ENCODE measurements at regions of chr12 and their contacts with region 1.

Region 1: GRCh38 chr12:123232807-123233543 is at the starts of genes MPHOSPH9 and MTRFR:
- DNase-seq: peak; percentile 99
- ATAC-seq: peak; percentile 97
- H3K4me3 ChIP-seq: peak within 1 kb of the TSS; percentile 70
- H3K27ac ChIP-seq: peak within 1 kb of the TSS; percentile 87
- H3K4me1 ChIP-seq: peaks cover 3% of the 10 kb centered on the region
- H3K27me3 ChIP-seq: no peaks in the 10 kb centered on the region
- CTCF ChIP-seq: no peak
- POLR2A ChIP-seq: peak; percentile 99
- RAD21 ChIP-seq: no peak
- total RNA-seq, gene MPHOSPH9: 17.0 and 30.8 TPM in 2 replicates
- total RNA-seq, gene MTRFR: 10.2 and 12.2 TPM in 2 replicates

Region 2: DNA sequence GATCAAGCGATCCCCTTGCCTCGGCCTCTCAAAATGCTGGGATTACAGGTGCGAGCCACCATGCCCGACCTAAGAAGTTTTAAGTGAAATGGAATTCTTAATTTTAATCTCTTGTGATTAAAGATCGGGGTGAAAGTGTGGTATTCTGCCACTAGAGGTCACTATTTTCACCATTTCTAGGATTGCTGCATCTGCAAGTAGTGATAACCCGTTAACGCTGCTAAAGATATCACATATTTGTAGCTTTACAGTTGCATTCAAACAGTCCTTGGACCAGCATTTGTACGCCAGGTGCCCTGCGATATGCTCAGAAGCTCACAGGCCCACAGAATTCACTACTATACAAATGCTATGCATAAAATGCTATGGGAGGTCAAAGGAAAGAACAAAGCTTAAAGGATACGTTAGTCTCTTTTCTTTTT is 439.3 kb before region 1 on chr12:
- CTCF ChIA-PET with region 1: interaction called, 5 read pairs
- POLR2A ChIA-PET with region 1: no interaction called
- dilution Hi-C with region 1: no loop called
- in situ Hi-C with region 1: no loop called
- intact Hi-C with region 1: loop called (anchors 2 kb)
- DNase-seq: peak; percentile 69
- ATAC-seq: peak; percentile 74
- H3K4me3 ChIP-seq: no peak overlapping the region
- H3K27ac ChIP-seq: no peak overlapping the region
- H3K4me1 ChIP-seq: no peaks in the 10 kb centered on the region
- H3K27me3 ChIP-seq: no peaks in the 10 kb centered on the region
- CTCF ChIP-seq: peak; percentile 71
- POLR2A ChIP-seq: no peak
- RAD21 ChIP-seq: peak; percentile 72

Region 3: GRCh38 chr12:122895705-122896636 is 337.0 kb before region 1 on chr12 and contains the start of gene VPS37B:
- CTCF ChIA-PET with region 1: no interaction called
- POLR2A ChIA-PET with region 1: no interaction called
- dilution Hi-C with region 1: no loop called
- in situ Hi-C with region 1: no loop called
- intact Hi-C with region 1: loop called (anchors 10 kb)
- DNase-seq: peak; percentile 90
- ATAC-seq: peak; percentile 55
- H3K4me3 ChIP-seq: peak within 1 kb of the TSS; percentile 97
- H3K27ac ChIP-seq: peak within 1 kb of the TSS; percentile 93
- H3K4me1 ChIP-seq: peaks cover 19% of the 10 kb centered on the region
- H3K27me3 ChIP-seq: no peaks in the 10 kb centered on the region
- CTCF ChIP-seq: no peak
- POLR2A ChIP-seq: peak; percentile 95
- RAD21 ChIP-seq: no peak
- total RNA-seq, gene VPS37B: 8.6 and 13.9 TPM in 2 replicates

Region 4: GRCh38 chr12:122974274-122974891 is 258.6 kb before region 1 on chr12:
- CTCF ChIA-PET with region 1: interaction called, 3 read pairs
- POLR2A ChIA-PET with region 1: interaction called, 6 read pairs
- dilution Hi-C with region 1: loop called (anchors 25 kb)
- in situ Hi-C with region 1: loop called (anchors 5 kb)
- intact Hi-C with region 1: no loop called
- DNase-seq: peak; percentile 98
- ATAC-seq: peak; percentile 87
- H3K4me3 ChIP-seq: peak overlapping the region; percentile 92
- H3K27ac ChIP-seq: peak overlapping the region; percentile 89
- H3K4me1 ChIP-seq: peaks cover 8% of the 10 kb centered on the region; the same call in 1 of the 2 replicates
- H3K27me3 ChIP-seq: no peaks in the 10 kb centered on the region
- CTCF ChIP-seq: no peak
- POLR2A ChIP-seq: no peak
- RAD21 ChIP-seq: no peak

Region 5: DNA sequence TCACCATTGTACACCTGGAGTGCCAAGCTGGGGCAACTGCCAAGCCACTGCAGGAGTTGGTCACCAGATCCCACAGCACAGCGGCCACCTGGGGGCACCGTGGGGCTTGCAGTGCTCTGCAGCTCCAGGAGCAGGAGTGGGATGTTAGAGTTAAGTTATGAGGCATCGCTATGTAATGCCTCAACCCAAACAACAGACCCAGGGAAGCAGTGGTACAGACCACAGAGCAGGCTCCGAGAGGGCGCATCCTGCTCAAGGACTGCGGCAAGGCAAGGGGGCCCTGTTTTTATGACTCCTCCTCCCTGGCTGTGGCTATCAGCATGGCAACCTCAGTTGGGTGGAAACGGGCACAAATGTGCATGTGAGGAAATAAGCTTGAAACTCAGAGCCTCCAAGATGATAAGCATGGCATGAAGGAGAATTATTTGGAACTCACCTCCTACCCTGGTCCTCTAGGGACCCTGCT is 189.4 kb before region 1 on chr12:
- CTCF ChIA-PET with region 1: interaction called, 27 read pairs
- POLR2A ChIA-PET with region 1: interaction called, 14 read pairs
- dilution Hi-C with region 1: no loop called
- in situ Hi-C with region 1: loop called (anchors 10 kb)
- intact Hi-C with region 1: loop called (anchors 1 kb)
- DNase-seq: peak; percentile 99
- ATAC-seq: peak; percentile 92
- H3K4me3 ChIP-seq: no peak overlapping the region
- H3K27ac ChIP-seq: peak overlapping the region; percentile 93
- H3K4me1 ChIP-seq: peaks cover 33% of the 10 kb centered on the region
- H3K27me3 ChIP-seq: no peaks in the 10 kb centered on the region
- CTCF ChIP-seq: peak; percentile 93
- POLR2A ChIP-seq: no peak; the same call in 1 of the 2 replicates
- RAD21 ChIP-seq: peak; percentile 97

Measured in IMR-90 (cell line).